Posterior vena cava (tissue), 2 donors: ENCODE measurements at regions of chr12 and their contacts with region 1.

Region 1: DNA sequence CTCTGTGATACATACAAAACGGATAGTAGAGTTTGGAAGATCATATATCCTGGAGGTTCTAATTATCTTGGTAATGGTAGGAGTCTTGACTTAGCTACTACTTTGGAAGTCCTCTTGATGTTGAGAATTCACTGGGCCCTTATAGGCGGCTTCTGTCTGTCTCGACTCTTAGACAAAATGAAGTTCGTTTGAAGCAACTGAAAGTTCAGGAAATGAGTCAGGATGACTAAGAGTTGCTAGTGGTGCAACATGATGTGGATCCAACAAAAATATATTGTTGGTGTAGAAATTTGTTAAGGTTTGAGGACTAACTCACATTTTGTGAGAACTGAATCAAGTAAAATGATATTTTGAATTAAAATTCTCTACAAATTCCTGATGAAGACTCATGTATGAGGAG is 272.7 kb downstream of the AEBP2 start:
- DNase-seq: no peak

Region 2: DNA sequence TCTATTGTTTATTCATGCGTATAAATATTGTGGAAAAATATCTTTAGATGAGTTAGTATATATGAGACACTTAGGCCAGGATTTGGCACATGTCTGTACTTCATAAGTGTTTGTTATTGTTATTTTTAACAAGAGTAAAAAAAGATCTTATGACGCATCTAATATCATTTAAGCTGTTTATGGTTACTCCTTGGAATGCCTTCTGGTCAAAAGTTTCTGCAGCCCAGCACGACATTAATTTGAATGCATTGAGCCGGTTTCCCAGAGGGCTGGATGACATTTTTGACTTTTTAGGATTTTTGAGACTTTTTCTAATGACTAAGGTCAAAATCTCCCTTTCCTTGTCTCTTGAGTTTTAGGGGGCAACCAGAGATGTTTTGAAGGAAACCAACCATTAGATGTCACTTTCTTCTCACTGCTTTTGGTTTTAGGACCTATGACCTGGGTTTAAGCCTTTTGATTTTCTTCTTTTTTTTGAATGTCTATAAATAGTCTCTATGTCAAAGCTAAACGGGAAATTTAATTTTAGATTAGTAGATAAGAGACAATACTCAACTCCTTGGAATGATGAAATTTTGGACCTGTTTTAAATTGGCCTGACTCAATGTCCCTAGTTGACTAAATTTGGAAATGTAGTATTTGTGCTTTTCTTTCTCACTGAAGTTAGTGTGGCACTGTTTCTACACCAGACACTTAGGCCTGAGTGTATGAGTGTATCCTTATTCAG is 57.2 kb before region 1 on chr12:
- intact Hi-C with region 1: loop called in 1 of 2 experiments (anchors 10 kb)
- DNase-seq: no peak

Region 3: DNA sequence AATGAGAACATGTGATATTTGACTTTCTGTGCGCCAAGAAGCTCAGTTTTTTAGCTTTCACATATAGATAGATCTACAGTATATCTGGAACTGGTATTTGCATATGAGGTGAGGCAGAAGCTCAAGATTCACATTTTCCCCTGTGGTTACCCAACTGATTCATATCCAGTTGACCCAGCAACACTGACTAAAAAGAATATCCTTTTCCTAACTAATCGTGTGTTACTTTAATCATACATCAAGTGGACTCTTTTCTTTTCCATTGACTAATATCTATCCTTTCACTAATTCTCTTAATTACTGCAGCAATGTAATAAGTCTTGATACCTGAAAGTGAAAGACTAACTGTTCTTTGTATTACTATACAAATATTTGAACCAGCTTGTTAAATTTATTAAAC is 36.7 kb before region 1 on chr12:
- intact Hi-C with region 1: no loop called
- DNase-seq: no peak

Region 4: GRCh38 chr12:19978193-19978592 is 266.2 kb after region 1 on chr12:
- intact Hi-C with region 1: no loop called
- DNase-seq: no peak